ENCODE measurements at regions of chr5 and their contacts with region 1.

Region 1: DNA sequence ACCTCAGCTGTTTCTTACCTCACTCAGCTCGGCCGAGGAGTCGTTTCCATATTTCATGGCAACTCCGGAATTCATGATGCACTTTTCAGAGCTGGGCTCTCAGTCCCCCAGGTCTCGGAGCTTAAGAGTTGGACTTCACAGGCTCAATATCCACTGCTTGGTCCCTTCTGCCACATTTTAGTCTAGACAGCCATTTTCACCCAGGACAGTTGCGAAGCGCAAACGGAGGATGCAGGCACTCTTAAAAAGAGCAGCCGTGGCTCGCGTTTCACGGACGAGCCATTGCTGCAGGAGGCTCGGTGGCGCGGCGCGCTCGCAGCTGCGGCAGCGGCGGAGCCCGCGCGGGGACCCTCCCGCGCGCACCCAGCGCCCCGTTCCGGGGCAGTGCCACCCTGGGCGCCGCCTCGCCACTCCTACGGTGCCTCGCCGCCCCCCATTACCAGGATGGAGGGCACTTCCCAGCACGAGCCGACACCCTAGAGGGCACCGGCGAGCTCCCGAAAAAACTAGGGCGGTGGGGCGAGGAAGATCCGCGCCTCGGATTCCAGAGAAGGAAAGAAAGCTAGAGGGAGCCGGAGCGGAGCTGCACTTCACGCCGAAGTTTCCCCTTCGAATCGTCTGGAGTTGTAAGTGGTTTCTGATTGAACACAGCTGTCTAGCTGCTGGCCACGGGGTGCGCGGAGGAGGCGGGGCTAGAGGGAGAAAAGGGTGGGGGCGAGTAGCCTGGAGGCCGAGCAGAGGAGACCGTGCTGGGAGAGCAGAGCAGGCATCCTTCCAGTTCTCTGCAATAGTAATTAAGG is 140.3 kb downstream of the TSSK1B start:
- DNase-seq: peak; percentile 69 to 82 (median 71)
- H3K4me3 ChIP-seq: peak overlapping the region; percentile 67 to 77
- H3K4me3 Mint-ChIP-seq: peak overlapping the region; percentile 89 to 97 (median 96)
- H3K27ac ChIP-seq: peak overlapping the region; percentile 26
- H3K27ac Mint-ChIP-seq: peak overlapping the region; percentile 56 to 92 (median 89)
- H3K4me1 ChIP-seq: peaks cover 22% of the 10 kb centered on the region
- H3K4me1 Mint-ChIP-seq: peaks cover 13 to 32% (median 23%) of the 10 kb centered on the region in 4 donors
- H3K27me3 ChIP-seq: peaks cover 12% of the 10 kb centered on the region
- H3K27me3 Mint-ChIP-seq: peaks cover 7 to 14% of the 10 kb centered on the region in 2 donors

Region 2: DNA sequence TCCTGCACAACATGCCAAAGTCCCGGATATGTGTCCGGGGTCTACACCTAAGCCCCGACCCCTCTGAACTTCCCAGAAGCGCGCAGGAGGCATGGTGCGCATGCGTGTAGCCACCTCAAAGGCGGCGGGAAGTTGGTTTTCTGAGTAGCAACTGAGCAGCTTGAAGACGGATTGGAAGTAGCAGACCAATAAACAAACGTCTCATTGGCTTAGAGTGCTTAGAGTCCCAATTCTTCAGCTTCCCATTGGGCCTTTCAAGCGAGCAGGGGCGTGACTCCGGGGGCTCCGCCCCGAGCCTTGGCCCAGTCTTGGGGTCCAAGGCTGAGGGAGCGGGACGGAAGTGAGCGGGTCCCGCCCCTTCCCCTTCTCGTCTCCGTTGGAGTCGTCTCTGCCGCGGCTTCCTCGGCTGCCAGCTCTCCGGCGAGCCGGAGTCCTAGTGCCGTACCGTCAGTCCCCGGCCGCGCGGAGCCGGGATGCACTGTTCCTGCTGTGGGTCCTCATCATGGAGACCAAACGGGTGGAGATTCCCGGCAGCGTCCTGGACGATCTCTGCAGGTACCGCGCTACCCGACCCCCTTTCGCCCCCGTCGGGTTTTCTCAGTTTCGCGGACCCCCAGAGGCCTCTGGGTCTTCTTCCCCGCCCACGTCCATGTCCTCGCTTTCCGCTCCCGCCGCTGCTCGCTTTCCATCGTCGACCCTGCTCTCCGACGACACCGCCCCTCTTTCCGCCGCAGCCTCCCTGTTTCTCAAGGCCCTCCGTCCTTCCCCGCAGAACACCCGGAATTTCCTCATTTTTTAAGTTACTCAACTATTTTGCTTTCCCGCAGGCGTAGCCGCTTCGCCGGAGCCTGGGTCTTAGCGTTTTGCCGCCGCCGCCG is 317.8 kb before region 1 on chr5 and contains the start of gene DCP2:
- CTCF ChIA-PET with region 1: no interaction called
- POLR2A ChIA-PET with region 1: interaction called, 10 read pairs
- intact Hi-C with region 1: no loop called
- DNase-seq: peak; percentile 95 to 97 (median 97)
- H3K4me3 ChIP-seq: peak within 1 kb of the TSS; percentile 77 to 79
- H3K4me3 Mint-ChIP-seq: peak within 1 kb of the TSS; percentile 96 to 100 (median 99)
- H3K27ac ChIP-seq: peak within 1 kb of the TSS; percentile 85
- H3K27ac Mint-ChIP-seq: peak within 1 kb of the TSS; percentile 94 to 98 (median 97)
- H3K4me1 ChIP-seq: peaks cover 45% of the 10 kb centered on the region
- H3K4me1 Mint-ChIP-seq: peaks cover 31 to 63% (median 43%) of the 10 kb centered on the region in 4 donors
- H3K27me3 ChIP-seq: no peaks in the 10 kb centered on the region
- H3K27me3 Mint-ChIP-seq: peaks cover 0 to 4% of the 10 kb centered on the region in 2 donors
- total RNA-seq, gene DCP2: 116 to 123 TPM

Region 3: DNA sequence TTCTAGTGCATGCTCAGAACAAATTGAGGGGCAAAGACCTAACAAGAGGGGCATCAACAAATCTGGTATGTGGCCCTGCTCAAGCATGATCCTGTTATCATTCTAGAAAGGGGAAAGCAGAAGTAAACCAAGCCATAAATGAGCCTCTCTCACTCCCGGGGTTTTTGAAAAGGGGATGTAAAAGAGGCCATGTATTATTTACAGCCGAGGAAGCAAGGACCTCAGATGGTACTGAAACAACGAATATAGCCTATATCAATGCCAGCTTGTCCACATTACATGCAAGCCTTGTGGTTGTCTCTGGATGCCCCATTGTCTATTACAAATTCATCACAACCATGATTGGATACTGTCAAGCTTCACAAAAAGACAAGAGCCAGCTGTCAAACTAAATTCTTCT is 106.6 kb before region 1 on chr5:
- CTCF ChIA-PET with region 1: no interaction called
- POLR2A ChIA-PET with region 1: no interaction called
- intact Hi-C with region 1: no loop called
- DNase-seq: no peak
- H3K4me3 ChIP-seq: no peak overlapping the region
- H3K4me3 Mint-ChIP-seq: no peak overlapping the region
- H3K27ac ChIP-seq: no peak overlapping the region
- H3K27ac Mint-ChIP-seq: no peak overlapping the region
- H3K4me1 ChIP-seq: no peaks in the 10 kb centered on the region
- H3K4me1 Mint-ChIP-seq: peaks cover 0 to 9% (median 2%) of the 10 kb centered on the region in 4 donors
- H3K27me3 ChIP-seq: no peaks in the 10 kb centered on the region
- H3K27me3 Mint-ChIP-seq: no peaks in the 10 kb centered on the region

Region 4: DNA sequence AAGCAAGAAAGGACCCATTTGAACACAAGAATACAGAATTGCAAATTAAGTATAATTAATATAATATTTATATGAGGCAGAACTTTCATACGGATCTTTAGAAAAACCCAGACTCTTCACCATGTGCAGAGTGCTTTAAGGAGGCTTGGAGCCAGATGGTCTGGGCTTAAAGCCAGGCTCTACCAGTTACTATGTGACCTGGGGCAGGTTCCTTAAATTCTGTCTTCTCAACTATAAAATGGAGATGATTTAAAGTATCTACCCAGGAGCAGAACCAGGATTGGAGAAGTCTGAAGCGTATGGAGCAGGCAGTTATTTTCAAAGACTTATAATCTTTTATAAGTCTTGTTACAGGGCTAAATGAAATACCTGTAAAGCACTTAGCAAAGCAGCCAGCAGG is 61.8 kb before region 1 on chr5:
- CTCF ChIA-PET with region 1: no interaction called
- POLR2A ChIA-PET with region 1: no interaction called
- intact Hi-C with region 1: no loop called
- DNase-seq: no peak
- H3K4me3 ChIP-seq: no peak overlapping the region
- H3K4me3 Mint-ChIP-seq: no peak overlapping the region
- H3K27ac ChIP-seq: no peak overlapping the region
- H3K27ac Mint-ChIP-seq: no peak overlapping the region
- H3K4me1 ChIP-seq: no peaks in the 10 kb centered on the region
- H3K4me1 Mint-ChIP-seq: peaks cover under 1 to 10% (median 5%) of the 10 kb centered on the region in 4 donors
- H3K27me3 ChIP-seq: no peaks in the 10 kb centered on the region
- H3K27me3 Mint-ChIP-seq: peaks cover 1 to 5% of the 10 kb centered on the region in 2 donors

Region 5: GRCh38 chr5:113330533-113331208 is 36.2 kb after region 1 on chr5:
- CTCF ChIA-PET with region 1: no interaction called
- POLR2A ChIA-PET with region 1: no interaction called
- intact Hi-C with region 1: loop called (anchors 1 kb)
- DNase-seq: peak; percentile 41 to 69 (median 65)
- H3K4me3 ChIP-seq: no peak overlapping the region
- H3K4me3 Mint-ChIP-seq: peak overlapping the region in 6 of 8 donors; percentile 0 to 49 (median 30)
- H3K27ac ChIP-seq: no peak overlapping the region
- H3K27ac Mint-ChIP-seq: peak overlapping the region in 3 of 7 donors; percentile 43 to 81 (median 77)
- H3K4me1 ChIP-seq: peaks cover 11% of the 10 kb centered on the region
- H3K4me1 Mint-ChIP-seq: peaks cover 10 to 20% (median 12%) of the 10 kb centered on the region in 4 donors
- H3K27me3 ChIP-seq: no peaks in the 10 kb centered on the region
- H3K27me3 Mint-ChIP-seq: no peaks in the 10 kb centered on the region

Measured in CD4-positive, alpha-beta memory T cell (primary cell).